Vagina (tissue), 2 donors: ENCODE measurements at regions of chr1 and their contacts with region 1.

Region 1: GRCh38 chr1:207805841-207806421 is 54.1 kb downstream of the CD46 start:
- DNase-seq: peak in 1 of 2 donors; percentile 95
- H3K4me3 ChIP-seq: no peak overlapping the region
- H3K27ac ChIP-seq: peak overlapping the region; percentile 77
- H3K4me1 ChIP-seq: peaks cover 67% of the 10 kb centered on the region
- H3K27me3 ChIP-seq: no peaks in the 10 kb centered on the region
- CTCF ChIP-seq: no peak
- POLR2A ChIP-seq: no peak

Region 2: GRCh38 chr1:207612762-207613161 is 193.2 kb before region 1 on chr1:
- intact Hi-C with region 1: no loop called
- DNase-seq: no peak
- H3K4me3 ChIP-seq: no peak overlapping the region
- H3K27ac ChIP-seq: no peak overlapping the region
- H3K4me1 ChIP-seq: no peaks in the 10 kb centered on the region
- H3K27me3 ChIP-seq: no peaks in the 10 kb centered on the region
- CTCF ChIP-seq: no peak
- POLR2A ChIP-seq: no peak

Region 3: GRCh38 chr1:209349363-209350308 is 1543.7 kb after region 1 on chr1:
- intact Hi-C with region 1: loop called (anchors 5 kb)
- DNase-seq: no peak
- H3K4me3 ChIP-seq: no peak overlapping the region
- H3K27ac ChIP-seq: no peak overlapping the region
- H3K4me1 ChIP-seq: peaks cover 5% of the 10 kb centered on the region
- H3K27me3 ChIP-seq: no peaks in the 10 kb centered on the region
- CTCF ChIP-seq: no peak
- POLR2A ChIP-seq: no peak